Aorta (tissue), 5 donors: ENCODE measurements at regions of chr18 and their contacts with region 1.

Region 1: DNA sequence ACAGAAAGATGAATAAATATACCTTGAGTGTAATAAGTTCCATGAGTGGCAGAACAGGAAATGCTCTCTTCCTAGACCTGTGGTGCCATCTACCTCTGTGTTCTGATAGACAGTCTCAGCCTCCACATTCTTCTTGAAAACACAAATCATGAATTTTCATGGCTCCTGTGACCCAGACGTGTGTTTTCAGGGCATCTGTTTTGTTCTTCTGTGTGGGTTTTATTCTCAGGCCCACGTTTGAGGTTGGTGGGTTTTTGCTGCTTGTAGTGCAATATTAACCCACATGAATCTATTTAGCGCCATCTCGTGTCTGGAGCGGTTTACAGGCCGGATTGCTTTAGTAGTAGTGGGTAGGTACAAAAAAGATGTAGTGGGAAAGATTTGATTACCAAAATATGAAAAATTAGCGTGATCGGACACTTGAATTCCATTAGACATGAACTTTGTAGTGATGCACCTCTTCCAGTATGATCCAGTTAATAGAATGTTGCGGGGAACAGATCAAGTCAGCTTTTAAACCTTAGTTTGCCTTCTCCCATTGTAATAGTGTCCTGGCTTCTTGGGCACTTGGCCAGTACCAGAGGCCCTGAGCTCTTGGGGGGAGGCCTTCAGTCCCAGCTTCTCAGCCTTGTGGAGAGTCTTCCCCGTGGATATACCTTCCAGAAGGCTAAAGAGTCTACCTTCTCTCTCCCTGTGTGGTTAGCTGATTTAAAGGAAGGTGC is 256.5 kb downstream of the TPGS2 start:
- DNase-seq: no peak
- ATAC-seq: peak; percentile 67
- H3K4me3 ChIP-seq: no peak overlapping the region
- H3K27ac ChIP-seq: no peak overlapping the region
- H3K4me1 ChIP-seq: no peaks in the 10 kb centered on the region
- H3K27me3 ChIP-seq: no peaks in the 10 kb centered on the region

Region 2: GRCh38 chr18:36095936-36096519 is 476.3 kb before region 1 on chr18:
- intact Hi-C with region 1: loop called in 1 of 2 experiments (anchors 5 kb)
- DNase-seq: no peak
- ATAC-seq: no peak
- H3K4me3 ChIP-seq: no peak overlapping the region
- H3K27ac ChIP-seq: no peak overlapping the region
- H3K4me1 ChIP-seq: no peaks in the 10 kb centered on the region
- H3K27me3 ChIP-seq: no peaks in the 10 kb centered on the region

Region 3: GRCh38 chr18:36441426-36442240 is 130.7 kb before region 1 on chr18:
- intact Hi-C with region 1: loop called in 1 of 2 experiments (anchors 10 kb)
- DNase-seq: no peak
- ATAC-seq: peak; percentile 80
- H3K4me3 ChIP-seq: no peak overlapping the region
- H3K27ac ChIP-seq: peak overlapping the region; percentile 84 to 93
- H3K4me1 ChIP-seq: peaks cover 5% of the 10 kb centered on the region in 2 donors
- H3K27me3 ChIP-seq: no peaks in the 10 kb centered on the region